WTC11 (cell line): ENCODE measurements at regions of chr4 and their contacts with region 1.

Region 1: DNA sequence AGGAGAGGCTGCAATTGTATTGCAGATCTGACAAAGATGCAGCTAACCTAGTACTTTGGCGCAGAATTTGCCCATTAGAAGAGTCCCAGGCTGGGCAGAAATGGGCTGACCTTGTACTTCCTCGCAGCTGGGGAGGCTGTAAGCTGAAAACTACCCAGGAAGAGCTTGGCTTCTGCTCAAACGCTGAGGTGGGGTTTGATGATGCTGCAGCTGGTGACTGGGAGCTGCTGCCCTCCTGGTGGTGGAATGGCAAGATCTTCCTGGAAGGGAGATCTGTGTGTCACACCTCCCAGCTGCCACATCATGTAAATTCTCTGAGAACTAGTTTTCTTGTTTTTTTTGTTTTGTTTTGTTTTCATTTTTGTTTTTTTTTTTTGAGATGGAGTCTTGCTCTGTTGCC is 17.4 kb downstream of the CCNG2 start:
- DNase-seq: no peak
- ATAC-seq: no peak
- H3K4me3 Mint-ChIP-seq: no peak overlapping the region
- H3K27ac Mint-ChIP-seq: no peak overlapping the region
- H3K4me1 Mint-ChIP-seq: peaks cover 33% of the 10 kb centered on the region
- H3K27me3 Mint-ChIP-seq: peaks cover 77% of the 10 kb centered on the region
- CTCF ChIP-seq: no peak

Region 2: DNA sequence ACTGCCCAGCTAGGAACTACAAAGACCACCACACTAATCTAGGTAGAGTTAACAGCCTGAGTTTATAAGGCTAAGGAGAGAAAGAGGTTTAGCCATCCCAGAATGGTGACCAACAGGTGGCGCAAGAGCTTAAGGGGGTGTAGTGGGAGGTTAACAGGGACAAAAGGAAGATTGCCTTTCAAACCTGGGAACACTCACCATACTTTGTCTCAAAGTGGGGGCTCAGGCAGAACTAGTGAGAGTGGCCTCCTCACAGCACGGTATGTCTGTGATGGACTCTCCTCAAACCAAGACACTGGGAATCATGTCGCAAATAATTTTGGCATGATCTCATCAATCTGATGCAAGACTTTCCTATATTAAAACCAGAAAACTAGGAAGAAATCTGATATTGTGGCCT is 122.1 kb before region 1 on chr4:
- CTCF ChIA-PET with region 1: interaction called, 16 read pairs
- POLR2A ChIA-PET with region 1: no interaction called
- DNase-seq: peak; percentile 89
- ATAC-seq: peak; percentile 89
- H3K4me3 Mint-ChIP-seq: no peak overlapping the region
- H3K27ac Mint-ChIP-seq: peak overlapping the region; percentile 82
- H3K4me1 Mint-ChIP-seq: peaks cover 7% of the 10 kb centered on the region
- H3K27me3 Mint-ChIP-seq: no peaks in the 10 kb centered on the region
- CTCF ChIP-seq: peak; percentile 59

Region 3: DNA sequence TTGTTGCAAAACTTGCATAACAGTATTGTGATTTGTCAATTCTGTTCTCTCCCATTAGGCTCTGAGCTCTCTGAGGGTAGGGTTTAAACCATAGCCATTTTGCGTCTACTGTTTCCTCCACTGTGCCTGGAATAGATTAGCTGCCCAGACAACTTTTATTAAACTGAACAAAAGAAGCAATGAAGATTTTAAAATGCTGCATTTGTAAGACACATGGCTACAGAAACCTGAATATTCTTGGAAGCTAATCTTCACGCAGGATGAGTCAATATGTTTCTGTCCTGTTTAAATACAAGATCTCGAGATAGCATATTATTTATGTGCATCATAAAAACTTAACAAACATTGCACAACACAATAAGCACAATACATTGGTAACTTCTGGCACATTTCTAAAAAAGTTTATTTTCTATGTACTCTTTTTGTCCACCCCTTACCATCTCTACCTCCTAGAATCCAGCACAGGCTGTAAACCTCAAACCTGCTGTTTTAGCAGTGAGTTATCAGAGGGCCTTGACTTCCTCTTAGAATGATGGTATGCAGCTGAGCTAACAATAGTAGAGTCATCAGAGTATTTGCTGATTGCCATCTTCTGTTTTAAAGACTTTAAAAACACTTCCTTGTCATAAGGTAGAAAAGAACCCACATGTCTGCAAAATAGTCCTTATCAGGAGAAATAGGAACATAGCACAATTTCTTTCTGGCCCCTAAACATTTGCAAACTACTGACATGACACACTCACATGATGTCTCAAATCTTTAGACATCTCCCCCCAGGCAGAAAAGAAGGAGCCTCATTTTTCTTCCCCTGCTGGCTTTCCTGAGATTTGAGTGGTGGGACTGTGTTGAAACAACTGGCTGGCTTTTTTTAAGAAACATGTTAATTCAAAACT is 28.0 kb before region 1 on chr4:
- CTCF ChIA-PET with region 1: no interaction called
- POLR2A ChIA-PET with region 1: no interaction called
- DNase-seq: no peak
- ATAC-seq: no peak
- H3K4me3 Mint-ChIP-seq: no peak overlapping the region
- H3K27ac Mint-ChIP-seq: no peak overlapping the region
- H3K4me1 Mint-ChIP-seq: peaks cover 13% of the 10 kb centered on the region
- H3K27me3 Mint-ChIP-seq: no peaks in the 10 kb centered on the region
- CTCF ChIP-seq: no peak

Region 4: GRCh38 chr4:77193511-77194102 is 19.2 kb after region 1 on chr4:
- CTCF ChIA-PET with region 1: interaction called, 10 read pairs
- POLR2A ChIA-PET with region 1: no interaction called
- DNase-seq: peak; percentile 84
- ATAC-seq: peak; percentile 100
- H3K4me3 Mint-ChIP-seq: peak overlapping the region; percentile 38
- H3K27ac Mint-ChIP-seq: no peak overlapping the region
- H3K4me1 Mint-ChIP-seq: peaks cover 8% of the 10 kb centered on the region
- H3K27me3 Mint-ChIP-seq: peaks cover 50% of the 10 kb centered on the region
- CTCF ChIP-seq: no peak